ENCODE measurements at regions of chr15 and their contacts with region 1.

Region 1: GRCh38 chr15:87792250-87793040 is 464.1 kb downstream of the NTRK3 start:
- DNase-seq: no peak
- H3K4me3 ChIP-seq: no peak overlapping the region
- H3K27ac ChIP-seq: no peak overlapping the region
- H3K4me1 ChIP-seq: no peaks in the 10 kb centered on the region
- H3K27me3 ChIP-seq: no peaks in the 10 kb centered on the region
- CTCF ChIP-seq: no peak
- EP300 ChIP-seq: no peak
- POLR2A ChIP-seq: no peak

Region 2: GRCh38 chr15:87781959-87782625 is 10.4 kb before region 1 on chr15:
- intact Hi-C with region 1: loop called in 1 of 4 experiments (anchors 2 kb)
- DNase-seq: no peak
- H3K4me3 ChIP-seq: no peak overlapping the region
- H3K27ac ChIP-seq: no peak overlapping the region
- H3K4me1 ChIP-seq: no peaks in the 10 kb centered on the region
- H3K27me3 ChIP-seq: no peaks in the 10 kb centered on the region
- CTCF ChIP-seq: no peak
- EP300 ChIP-seq: no peak
- POLR2A ChIP-seq: no peak

Region 3: DNA sequence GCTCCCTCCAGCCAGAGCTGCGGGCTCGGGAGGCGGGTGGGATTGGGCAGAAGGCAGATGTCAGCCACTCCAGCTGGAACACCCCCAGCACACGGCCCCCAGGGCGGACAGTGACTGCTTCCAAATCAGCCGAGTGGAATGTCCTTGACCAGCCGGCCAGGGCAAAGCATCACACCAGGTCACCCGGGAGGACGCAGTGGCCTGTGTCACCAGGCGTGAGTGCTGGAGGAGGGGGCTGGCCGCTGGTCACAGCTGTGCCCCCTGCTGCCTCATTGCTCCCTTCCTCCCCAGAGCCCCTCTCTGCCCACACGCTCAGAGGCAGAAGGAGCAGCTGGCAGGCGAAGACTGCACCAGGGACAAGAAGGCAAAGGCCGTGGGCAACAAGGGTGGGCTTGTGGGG is 430.6 kb after region 1 on chr15:
- intact Hi-C with region 1: no loop called
- DNase-seq: no peak
- H3K4me3 ChIP-seq: no peak overlapping the region
- H3K27ac ChIP-seq: no peak overlapping the region
- H3K4me1 ChIP-seq: no peaks in the 10 kb centered on the region
- H3K27me3 ChIP-seq: no peaks in the 10 kb centered on the region
- CTCF ChIP-seq: no peak
- EP300 ChIP-seq: no peak
- POLR2A ChIP-seq: no peak

Measured in ovary (tissue), 10 donors.